Ovary (tissue), 10 donors: ENCODE measurements at regions of chr10 and their contacts with region 1.

Region 1: DNA sequence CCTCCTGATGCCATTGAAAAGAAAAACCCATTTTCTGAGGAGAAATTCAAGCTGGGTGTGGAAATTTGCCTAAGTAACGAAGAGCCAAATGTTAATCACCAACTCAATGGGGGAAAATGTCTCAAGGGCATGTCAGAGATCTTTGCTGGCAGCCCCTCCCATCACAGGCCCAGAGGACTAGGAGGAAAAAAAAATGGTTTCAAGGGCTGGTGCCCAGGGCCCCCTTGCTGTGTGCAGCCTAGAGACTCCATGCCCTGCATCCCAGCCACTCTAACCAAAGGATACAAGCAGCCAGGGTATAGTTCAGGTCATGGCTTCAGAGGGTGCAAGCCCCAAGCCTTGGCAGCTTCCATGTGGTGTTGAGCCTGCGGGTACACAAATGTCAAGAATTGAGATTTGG is 106.3 kb downstream of the ALOX5 start:
- DNase-seq: no peak
- H3K4me3 ChIP-seq: no peak overlapping the region
- H3K27ac ChIP-seq: no peak overlapping the region
- H3K4me1 ChIP-seq: no peaks in the 10 kb centered on the region
- H3K27me3 ChIP-seq: no peaks in the 10 kb centered on the region
- CTCF ChIP-seq: no peak
- EP300 ChIP-seq: no peak
- POLR2A ChIP-seq: no peak

Region 2: GRCh38 chr10:45325116-45325515 is 155.2 kb before region 1 on chr10:
- intact Hi-C with region 1: no loop called
- DNase-seq: no peak
- H3K4me3 ChIP-seq: no peak overlapping the region
- H3K27ac ChIP-seq: no peak overlapping the region
- H3K4me1 ChIP-seq: no peaks in the 10 kb centered on the region
- H3K27me3 ChIP-seq: no peaks in the 10 kb centered on the region
- CTCF ChIP-seq: no peak
- EP300 ChIP-seq: no peak
- POLR2A ChIP-seq: no peak

Region 3: GRCh38 chr10:45442662-45443061 is 37.6 kb before region 1 on chr10:
- intact Hi-C with region 1: loop called in 1 of 4 experiments (anchors 2 kb)
- DNase-seq: no peak
- H3K4me3 ChIP-seq: no peak overlapping the region
- H3K27ac ChIP-seq: no peak overlapping the region
- H3K4me1 ChIP-seq: no peaks in the 10 kb centered on the region
- H3K27me3 ChIP-seq: no peaks in the 10 kb centered on the region
- CTCF ChIP-seq: no peak
- EP300 ChIP-seq: no peak
- POLR2A ChIP-seq: no peak

Region 4: DNA sequence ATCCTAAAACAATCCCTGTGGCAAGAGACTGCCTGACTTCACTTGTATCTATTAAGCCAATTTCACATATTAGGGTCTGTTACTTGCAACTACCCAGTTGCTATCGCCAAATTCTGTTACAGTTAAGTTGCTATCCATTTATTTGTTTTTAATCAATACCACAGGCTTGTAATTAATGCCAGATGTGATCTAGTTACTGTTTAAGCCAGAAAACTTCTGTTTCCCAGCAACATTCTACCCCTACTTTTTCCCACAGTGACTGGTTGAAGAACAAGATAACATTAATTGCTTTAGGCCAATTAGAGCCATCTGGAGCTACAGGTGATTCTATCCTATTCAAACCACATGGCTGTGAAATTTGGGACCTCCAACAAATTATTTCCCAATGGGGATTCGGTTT is 25.0 kb after region 1 on chr10:
- intact Hi-C with region 1: no loop called
- DNase-seq: no peak
- H3K4me3 ChIP-seq: no peak overlapping the region
- H3K27ac ChIP-seq: no peak overlapping the region
- H3K4me1 ChIP-seq: peaks cover 1% of the 10 kb centered on the region
- H3K27me3 ChIP-seq: no peaks in the 10 kb centered on the region
- CTCF ChIP-seq: no peak
- EP300 ChIP-seq: no peak
- POLR2A ChIP-seq: no peak

Region 5: GRCh38 chr10:45544191-45544590 is 63.9 kb after region 1 on chr10:
- intact Hi-C with region 1: no loop called
- DNase-seq: no peak
- H3K4me3 ChIP-seq: no peak overlapping the region
- H3K27ac ChIP-seq: no peak overlapping the region
- H3K4me1 ChIP-seq: no peaks in the 10 kb centered on the region
- H3K27me3 ChIP-seq: no peaks in the 10 kb centered on the region
- CTCF ChIP-seq: no peak
- EP300 ChIP-seq: no peak
- POLR2A ChIP-seq: no peak